Stomach (tissue), 19 donors: ENCODE measurements at regions of chr4 and their contacts with region 1.

Region 1: GRCh38 chr4:56575820-56576429 is 70.3 kb downstream of the ARL9 start:
- DNase-seq: peak in 1 of 2 donors; percentile 51
- H3K4me3 ChIP-seq: no peak overlapping the region
- H3K27ac ChIP-seq: no peak overlapping the region
- H3K4me1 ChIP-seq: no peaks in the 10 kb centered on the region
- H3K27me3 ChIP-seq: no peaks in the 10 kb centered on the region
- CTCF ChIP-seq: peak in 4 of 7 experiments; percentile 18 to 65 (median 32)
- EP300 ChIP-seq: no peak
- POLR2A ChIP-seq: no peak

Region 2: DNA sequence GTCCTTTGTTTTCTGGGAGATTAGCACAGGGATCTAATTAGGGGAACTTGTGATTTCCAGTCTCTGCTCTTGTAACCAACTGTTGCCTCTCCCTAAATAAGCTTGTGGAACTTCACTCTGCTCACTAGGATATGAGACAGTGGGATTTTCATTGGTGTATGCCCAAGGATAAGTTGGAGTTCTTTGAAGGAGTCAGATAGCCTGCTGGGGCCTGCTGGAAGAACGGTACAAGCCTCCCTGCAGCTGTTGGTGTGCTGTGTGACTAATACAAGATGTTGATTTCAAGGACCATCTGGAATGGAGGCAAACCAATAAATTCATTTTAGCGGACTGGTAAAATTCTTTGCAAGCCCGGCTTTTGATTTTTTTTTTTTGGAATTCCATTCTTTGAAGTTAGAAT is 355.7 kb before region 1 on chr4:
- intact Hi-C with region 1: no loop called
- DNase-seq: no peak
- H3K4me3 ChIP-seq: no peak overlapping the region
- H3K27ac ChIP-seq: no peak overlapping the region
- H3K4me1 ChIP-seq: peaks cover 0 to 7% (median 0%) of the 10 kb centered on the region in 4 donors
- H3K27me3 ChIP-seq: no peaks in the 10 kb centered on the region
- CTCF ChIP-seq: no peak
- EP300 ChIP-seq: no peak
- POLR2A ChIP-seq: no peak

Region 3: DNA sequence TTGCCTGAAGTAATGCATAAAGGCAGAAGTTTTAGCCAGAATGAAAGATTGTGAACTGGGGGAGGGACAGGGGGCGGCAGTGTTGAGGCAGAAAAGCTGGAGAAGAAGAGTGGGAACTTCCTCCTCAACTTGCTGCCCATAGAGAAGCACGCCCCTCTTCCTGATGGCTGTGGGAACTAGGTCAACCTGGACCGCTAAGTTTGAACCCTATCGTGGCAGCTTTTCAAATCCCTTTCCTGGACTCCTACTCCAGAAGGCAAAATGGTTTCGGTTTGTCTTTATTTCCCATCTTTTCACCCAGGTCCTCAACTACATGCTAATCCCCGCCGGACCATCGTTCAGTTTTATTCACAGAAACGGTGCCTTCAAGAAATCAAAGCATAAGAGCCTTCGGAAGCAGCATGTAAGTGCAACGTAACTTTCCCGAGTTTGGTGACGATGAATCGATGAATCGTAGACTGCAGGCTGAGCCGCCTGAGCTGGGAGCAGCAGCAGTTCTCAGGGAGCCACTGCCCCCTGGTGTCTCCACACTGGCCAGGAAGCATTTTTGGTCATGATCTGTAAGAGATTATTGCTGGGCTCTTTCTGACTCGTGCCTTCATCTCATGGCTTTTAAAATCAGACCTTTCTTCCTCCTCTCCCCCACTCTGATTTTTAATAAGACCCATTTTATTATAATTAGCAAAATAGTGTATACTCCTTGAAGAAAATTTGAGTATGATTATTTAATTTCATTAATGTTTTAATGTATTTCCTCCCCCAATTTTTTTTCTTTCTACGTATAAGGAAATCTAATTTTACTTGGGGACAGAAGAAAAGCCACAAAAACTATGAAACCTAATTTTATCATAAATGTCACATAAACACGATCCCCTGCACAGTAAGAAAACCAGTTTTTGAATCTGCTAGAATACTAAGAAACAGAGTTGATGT is 224.2 kb after region 1 on chr4:
- intact Hi-C with region 1: loop called (anchors 10 kb)
- DNase-seq: peak; percentile 85 to 95
- H3K4me3 ChIP-seq: peak overlapping the region; percentile 49 to 69 (median 58)
- H3K27ac ChIP-seq: peak overlapping the region; percentile 61 to 84 (median 77)
- H3K4me1 ChIP-seq: peaks cover 0 to 15% (median 5%) of the 10 kb centered on the region in 4 donors
- H3K27me3 ChIP-seq: no peaks in the 10 kb centered on the region
- CTCF ChIP-seq: peak in 5 of 7 experiments; percentile 76 to 94 (median 82)
- EP300 ChIP-seq: no peak
- POLR2A ChIP-seq: no peak